Activated CD4-positive, alpha-beta memory T cell treated with anti-CD3 and anti-CD28 coated beads for 36 hours (primary cell): ENCODE measurements at regions of chr11 and their contacts with region 1.

Region 1: GRCh38 chr11:1882519-1883238 is 9.0 kb downstream of the PRR33 start:
- DNase-seq: peak; percentile 82
- H3K4me3 Mint-ChIP-seq: no peak overlapping the region
- H3K27ac Mint-ChIP-seq: no peak overlapping the region
- H3K4me1 Mint-ChIP-seq: no peaks in the 10 kb centered on the region
- H3K27me3 Mint-ChIP-seq: no peaks in the 10 kb centered on the region

Region 2: DNA sequence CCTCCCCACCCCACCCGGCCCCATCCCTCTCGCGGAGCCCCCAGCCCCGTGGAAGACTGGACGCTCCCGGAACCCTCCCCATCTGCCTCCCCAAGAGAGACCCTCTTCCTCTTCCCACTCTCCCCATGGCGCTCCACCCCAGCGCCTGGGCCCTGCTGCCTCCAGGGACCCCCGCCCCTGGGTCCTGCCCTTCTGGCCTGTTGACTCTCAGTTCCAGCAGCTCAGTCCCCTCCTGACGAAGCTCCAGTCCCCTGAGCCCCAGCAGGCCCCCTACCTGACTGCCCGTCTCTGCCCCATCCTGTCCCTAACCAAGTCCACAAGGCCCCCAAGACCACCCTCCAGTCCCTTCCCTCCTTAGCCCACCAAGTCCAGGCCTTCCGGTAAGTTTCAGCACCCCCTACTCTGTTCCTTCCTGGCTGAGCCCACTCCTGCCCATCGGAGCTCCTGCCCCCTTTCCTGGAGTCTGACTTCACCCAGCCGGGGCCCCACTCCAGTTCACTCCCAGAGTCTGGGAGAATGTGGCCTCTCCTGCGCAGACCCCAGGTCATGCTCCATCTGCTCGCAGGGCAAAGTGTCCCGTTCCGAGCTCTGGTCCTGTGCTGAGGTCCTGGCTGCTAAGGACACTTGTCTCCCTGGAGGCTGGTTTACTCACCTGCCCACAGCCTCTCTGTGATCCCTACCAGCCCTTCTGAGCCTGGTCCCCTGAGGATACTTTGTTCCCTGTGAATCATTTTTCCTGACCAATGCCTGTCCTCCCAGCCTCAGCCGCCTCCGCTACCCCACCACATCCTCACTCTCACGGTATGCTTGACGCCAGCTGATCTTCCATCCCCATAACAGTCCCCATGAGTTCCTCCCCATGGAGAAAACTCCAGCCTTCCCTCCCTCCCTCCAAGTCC is 133.0 kb before region 1 on chr11:
- CTCF ChIA-PET with region 1: no interaction called
- POLR2A ChIA-PET with region 1: no interaction called
- intact Hi-C with region 1: no loop called
- DNase-seq: no peak
- H3K4me3 Mint-ChIP-seq: no peak overlapping the region
- H3K27ac Mint-ChIP-seq: no peak overlapping the region
- H3K4me1 Mint-ChIP-seq: peaks cover 12% of the 10 kb centered on the region
- H3K27me3 Mint-ChIP-seq: peaks cover 13% of the 10 kb centered on the region

Region 3: DNA sequence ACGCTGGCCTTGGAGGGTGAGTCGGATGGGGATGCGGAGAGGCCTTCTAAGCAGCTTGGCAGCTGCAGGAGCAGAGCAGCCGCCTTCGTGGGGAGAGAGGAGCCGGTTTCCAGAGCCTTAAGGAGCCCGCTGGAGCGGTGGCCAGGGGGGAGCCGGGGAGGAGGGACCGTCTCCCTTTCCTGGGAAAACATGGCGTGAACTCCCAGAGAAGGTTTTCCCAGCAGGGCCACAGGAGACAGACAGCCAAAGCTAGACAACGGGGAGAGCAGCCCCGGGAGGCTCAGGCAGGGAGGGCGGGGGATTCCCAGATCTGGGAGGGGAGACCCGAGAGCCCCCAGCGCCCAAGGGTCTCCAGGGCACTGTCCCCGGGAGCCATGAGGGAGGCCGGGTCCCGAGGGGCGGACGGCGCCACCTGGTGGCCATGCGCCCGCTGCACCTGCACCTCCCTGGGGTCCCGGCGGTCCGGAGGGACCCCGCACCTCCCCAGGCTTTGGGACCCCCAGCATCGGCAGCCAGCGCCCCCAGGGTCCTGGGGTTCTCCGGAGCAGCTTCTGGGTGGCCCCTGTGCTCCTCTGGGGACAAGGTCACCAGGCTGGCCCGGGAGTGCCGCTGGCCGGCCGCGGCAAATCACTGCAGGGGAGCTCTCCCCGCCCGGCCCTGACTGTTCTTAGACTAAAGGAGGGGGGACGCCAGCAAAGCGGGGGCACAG is 50.3 kb before region 1 on chr11:
- CTCF ChIA-PET with region 1: interaction called, 16 read pairs
- POLR2A ChIA-PET with region 1: no interaction called
- intact Hi-C with region 1: no loop called
- DNase-seq: peak; percentile 66
- H3K4me3 Mint-ChIP-seq: no peak overlapping the region
- H3K27ac Mint-ChIP-seq: no peak overlapping the region
- H3K4me1 Mint-ChIP-seq: no peaks in the 10 kb centered on the region
- H3K27me3 Mint-ChIP-seq: peaks cover 5% of the 10 kb centered on the region

Region 4: DNA sequence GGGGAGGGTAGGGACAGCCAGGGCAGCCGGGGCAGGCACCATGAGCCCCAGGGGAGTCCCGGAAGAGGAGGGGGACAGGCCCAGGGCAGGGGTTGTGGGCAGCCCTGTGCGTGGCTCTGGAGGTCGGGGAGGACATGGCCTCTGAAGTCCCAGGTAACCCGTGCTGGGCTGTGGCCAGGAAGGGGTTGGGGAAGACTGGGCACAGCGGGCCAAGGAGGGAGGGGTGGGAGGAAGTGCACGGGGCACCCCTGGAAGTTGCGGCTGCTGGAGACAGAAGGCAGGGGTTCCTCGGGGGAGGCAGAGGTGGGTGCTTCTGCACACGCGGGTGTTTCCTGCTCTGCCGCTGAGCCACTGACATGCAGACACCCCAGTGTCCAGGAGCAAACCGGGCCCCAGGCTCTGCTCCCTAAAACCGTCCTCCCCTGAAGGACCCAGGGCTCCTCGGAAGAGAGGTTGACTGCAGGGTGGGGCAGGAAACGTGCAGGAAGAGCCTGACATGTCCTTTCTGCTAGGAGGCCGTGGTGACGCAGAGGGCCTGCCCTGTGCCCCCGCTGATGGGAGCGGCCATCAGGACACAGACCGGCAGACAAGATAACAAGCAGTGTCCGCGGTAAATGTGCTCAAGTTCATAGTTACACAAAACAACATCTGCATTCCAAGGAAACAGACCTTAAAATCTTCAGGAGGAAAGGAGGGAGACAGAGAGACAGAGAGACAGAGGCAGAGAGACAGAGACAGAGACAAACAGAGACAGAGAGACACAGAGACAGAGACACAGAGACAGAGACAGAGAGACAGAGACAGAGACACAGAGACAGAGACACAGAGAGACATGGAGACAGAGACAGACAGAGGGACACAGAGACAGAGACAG is 38.2 kb before region 1 on chr11:
- CTCF ChIA-PET with region 1: interaction called, 19 read pairs
- POLR2A ChIA-PET with region 1: no interaction called
- intact Hi-C with region 1: no loop called
- DNase-seq: peak; percentile 77
- H3K4me3 Mint-ChIP-seq: peak overlapping the region; percentile 67
- H3K27ac Mint-ChIP-seq: peak overlapping the region; percentile 77
- H3K4me1 Mint-ChIP-seq: peaks cover 47% of the 10 kb centered on the region
- H3K27me3 Mint-ChIP-seq: no peaks in the 10 kb centered on the region

Region 5: GRCh38 chr11:1858154-1858553 is 24.5 kb before region 1 on chr11:
- CTCF ChIA-PET with region 1: interaction called, 16 read pairs
- POLR2A ChIA-PET with region 1: interaction called, 3 read pairs
- intact Hi-C with region 1: no loop called
- DNase-seq: no peak
- H3K4me3 Mint-ChIP-seq: no peak overlapping the region
- H3K27ac Mint-ChIP-seq: no peak overlapping the region
- H3K4me1 Mint-ChIP-seq: peaks cover 23% of the 10 kb centered on the region
- H3K27me3 Mint-ChIP-seq: no peaks in the 10 kb centered on the region

Region 6: GRCh38 chr11:1896923-1897322 is 14.2 kb after region 1 on chr11:
- CTCF ChIA-PET with region 1: interaction called, 16 read pairs
- POLR2A ChIA-PET with region 1: no interaction called
- intact Hi-C with region 1: no loop called
- DNase-seq: no peak
- H3K4me3 Mint-ChIP-seq: no peak overlapping the region
- H3K27ac Mint-ChIP-seq: no peak overlapping the region
- H3K4me1 Mint-ChIP-seq: peaks cover 10% of the 10 kb centered on the region
- H3K27me3 Mint-ChIP-seq: peaks cover 6% of the 10 kb centered on the region

Region 7: DNA sequence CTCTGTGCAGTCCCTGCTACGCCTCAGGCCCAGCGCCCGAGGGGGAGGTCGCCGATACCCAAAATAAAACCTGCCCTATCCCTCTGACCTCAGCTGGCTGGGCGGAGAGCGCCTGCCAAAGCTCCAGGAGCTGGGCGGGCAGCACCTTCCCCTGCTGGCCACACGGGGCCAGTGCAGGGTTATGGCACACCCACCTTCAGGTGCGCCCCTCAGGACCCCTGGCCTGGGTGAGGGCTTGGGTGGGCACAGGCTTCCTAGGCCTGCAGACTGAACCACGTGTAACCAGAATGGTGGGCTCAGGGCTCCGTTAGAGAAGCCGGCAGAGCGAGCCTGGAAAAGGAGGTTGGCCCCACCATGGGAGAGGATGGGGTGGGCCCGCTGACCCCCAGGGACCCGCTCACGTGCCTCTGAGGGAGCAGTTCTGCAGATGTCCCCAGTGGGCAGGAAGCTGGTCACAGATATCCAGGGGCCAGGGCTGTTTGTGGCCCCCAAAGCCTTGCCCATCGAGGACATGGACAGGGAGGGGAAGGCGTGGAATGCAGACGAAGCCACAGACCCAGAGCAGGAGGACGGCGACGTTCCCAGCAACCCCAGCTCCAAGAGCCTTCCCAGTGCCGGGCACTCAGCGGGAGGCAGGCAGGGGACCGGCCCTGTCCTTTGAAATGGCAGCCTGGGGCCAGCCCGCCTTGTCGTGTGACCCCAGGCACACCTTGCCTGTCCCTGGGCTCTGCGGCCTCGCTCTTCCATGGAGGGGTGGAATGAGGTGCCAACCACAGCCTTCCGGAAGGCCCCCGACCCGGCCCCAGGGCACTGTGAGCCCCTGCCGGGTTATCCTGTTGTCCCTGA is 35.2 kb after region 1 on chr11:
- CTCF ChIA-PET with region 1: interaction called, 22 read pairs
- POLR2A ChIA-PET with region 1: no interaction called
- intact Hi-C with region 1: loop called (anchors 5 kb)
- DNase-seq: no peak
- H3K4me3 Mint-ChIP-seq: no peak overlapping the region
- H3K27ac Mint-ChIP-seq: no peak overlapping the region
- H3K4me1 Mint-ChIP-seq: peaks cover 9% of the 10 kb centered on the region
- H3K27me3 Mint-ChIP-seq: peaks cover 10% of the 10 kb centered on the region